Right cardiac atrium (tissue), 5 donors: ENCODE measurements at regions of chr5 and their contacts with region 1.

Region 1: GRCh38 chr5:59810041-59810440 is 83.5 kb downstream of the PDE4D start:
- DNase-seq: peak; percentile 73 to 87 (median 86)
- ATAC-seq: peak; percentile 64 to 66
- H3K4me3 ChIP-seq: no peak overlapping the region
- H3K27ac ChIP-seq: no peak overlapping the region
- H3K4me1 ChIP-seq: no peaks in the 10 kb centered on the region
- H3K27me3 ChIP-seq: no peaks in the 10 kb centered on the region

Region 2: DNA sequence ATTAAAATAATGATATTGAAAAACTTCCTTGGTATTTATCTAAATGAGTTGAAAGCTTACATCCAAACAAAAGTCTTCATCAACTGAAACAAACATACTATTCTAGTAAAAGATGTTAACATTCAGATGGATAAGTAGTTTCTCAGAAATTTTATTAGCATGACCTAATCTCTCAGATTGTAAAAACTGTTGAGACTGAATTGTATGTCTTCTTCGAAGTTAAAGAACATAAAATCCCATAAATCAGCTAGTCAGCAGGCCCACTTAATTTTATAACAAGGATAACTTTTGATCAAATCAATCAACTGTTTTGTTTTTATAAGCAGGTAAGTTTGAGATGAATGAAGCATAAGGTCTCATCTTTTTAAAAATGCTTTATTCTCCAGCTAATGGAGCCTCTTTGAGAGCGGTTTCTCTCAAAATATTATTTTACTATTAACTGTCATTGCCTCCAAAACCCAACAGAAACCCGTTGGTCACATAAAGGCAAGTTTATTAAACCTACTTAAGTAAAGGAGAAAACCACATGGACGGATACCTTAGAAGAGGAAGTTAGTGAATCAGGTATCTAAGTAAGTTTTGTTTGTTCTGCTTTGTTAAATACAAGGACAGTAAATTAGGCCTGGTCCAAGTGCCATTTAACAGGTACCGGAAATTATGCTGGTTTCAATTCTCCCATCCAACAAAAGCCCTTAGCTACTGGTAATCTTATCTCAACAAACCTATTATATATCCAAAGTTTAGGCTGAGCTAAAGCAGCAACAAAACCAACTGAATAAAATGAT is 373.5 kb before region 1 on chr5:
- intact Hi-C with region 1: no loop called
- DNase-seq: no peak
- ATAC-seq: no peak
- H3K4me3 ChIP-seq: no peak overlapping the region
- H3K27ac ChIP-seq: no peak overlapping the region
- H3K4me1 ChIP-seq: no peaks in the 10 kb centered on the region
- H3K27me3 ChIP-seq: no peaks in the 10 kb centered on the region

Region 3: DNA sequence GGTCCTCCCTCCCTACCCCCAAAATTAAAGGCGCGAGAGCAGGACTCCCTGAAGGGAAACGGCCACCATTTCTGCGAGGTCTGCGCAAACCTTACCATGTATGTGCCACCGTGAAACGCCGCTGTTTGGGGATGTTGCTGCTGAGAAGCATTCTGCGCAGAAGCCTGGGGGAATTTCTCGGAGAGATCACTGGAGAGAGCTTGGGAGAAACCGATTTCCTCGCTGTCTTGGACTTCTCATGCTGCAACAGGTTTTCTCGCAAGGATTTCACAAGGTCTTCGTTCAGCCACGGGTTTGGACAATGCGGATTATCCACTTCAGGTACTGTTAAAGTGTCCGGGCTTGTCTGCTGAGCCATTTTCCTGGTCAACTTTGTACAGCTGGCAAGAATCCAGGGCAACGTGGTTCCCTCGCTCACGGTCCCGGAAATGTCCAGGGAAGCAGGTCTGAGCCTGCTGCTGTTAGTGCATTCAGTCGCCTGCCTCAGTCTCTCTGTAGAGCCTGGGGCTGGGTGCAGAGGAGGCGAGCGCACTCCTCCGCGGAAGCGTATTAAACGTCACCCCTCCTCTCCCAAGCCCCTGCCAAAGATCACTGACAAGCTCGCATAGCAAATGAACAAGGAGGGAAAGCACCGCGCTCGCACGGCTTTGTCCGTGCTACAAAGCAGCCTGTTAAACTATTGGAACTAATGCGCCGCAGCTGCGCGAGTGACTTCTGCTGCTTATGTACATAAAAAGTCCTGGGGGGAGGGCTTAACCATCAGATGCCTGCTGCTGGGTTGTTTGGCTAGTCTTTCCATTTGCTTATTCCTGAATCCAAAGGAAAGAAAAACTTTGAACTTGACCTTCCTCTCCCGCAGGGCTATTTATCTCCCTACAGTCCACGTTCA is 41.6 kb before region 1 on chr5:
- intact Hi-C with region 1: no loop called
- DNase-seq: peak; percentile 40 to 75 (median 64)
- ATAC-seq: peak; percentile 80 to 83
- H3K4me3 ChIP-seq: peak overlapping the region; percentile 88
- H3K27ac ChIP-seq: peak overlapping the region; percentile 23
- H3K4me1 ChIP-seq: no peaks in the 10 kb centered on the region
- H3K27me3 ChIP-seq: no peaks in the 10 kb centered on the region

Region 4: GRCh38 chr5:60586307-60586901 is 776.4 kb after region 1 on chr5:
- intact Hi-C with region 1: loop called in 1 of 4 experiments (anchors 10 kb)
- DNase-seq: no peak
- ATAC-seq: no peak
- H3K4me3 ChIP-seq: no peak overlapping the region
- H3K27ac ChIP-seq: no peak overlapping the region
- H3K4me1 ChIP-seq: no peaks in the 10 kb centered on the region
- H3K27me3 ChIP-seq: no peaks in the 10 kb centered on the region

Region 5: GRCh38 chr5:60668686-60669304 is 858.8 kb after region 1 on chr5:
- intact Hi-C with region 1: loop called in 3 of 4 experiments (anchors 5 to 10 kb)
- DNase-seq: no peak
- ATAC-seq: no peak
- H3K4me3 ChIP-seq: no peak overlapping the region
- H3K27ac ChIP-seq: no peak overlapping the region
- H3K4me1 ChIP-seq: no peaks in the 10 kb centered on the region
- H3K27me3 ChIP-seq: no peaks in the 10 kb centered on the region

Region 6: GRCh38 chr5:60677844-60678664 is 868.0 kb after region 1 on chr5:
- intact Hi-C with region 1: loop called in 1 of 4 experiments (anchors 10 kb)
- DNase-seq: no peak
- ATAC-seq: no peak
- H3K4me3 ChIP-seq: no peak overlapping the region
- H3K27ac ChIP-seq: no peak overlapping the region
- H3K4me1 ChIP-seq: no peaks in the 10 kb centered on the region
- H3K27me3 ChIP-seq: no peaks in the 10 kb centered on the region